IMR-90 (cell line): ENCODE measurements at regions of chr1 and their contacts with region 1.

Region 1: DNA sequence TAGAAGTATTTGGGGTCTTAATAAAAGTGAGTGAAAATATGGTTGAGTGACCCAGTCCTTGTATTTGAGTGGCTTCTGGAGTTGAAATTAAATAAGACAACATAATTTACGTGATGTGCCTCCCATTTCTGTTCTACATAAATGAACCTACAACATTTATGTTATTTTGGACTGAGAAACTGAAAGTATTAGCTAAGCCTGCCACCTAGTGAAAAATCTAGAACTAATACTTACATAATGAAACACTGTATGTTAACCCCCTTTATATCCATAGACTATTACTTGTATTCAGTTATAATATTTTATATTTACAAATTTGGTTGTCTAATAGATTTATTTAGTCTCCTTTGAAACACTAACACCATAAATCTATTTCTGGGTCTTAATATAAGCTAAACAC is 298.9 kb downstream of the KCNT2 start:
- DNase-seq: peak; percentile 68
- ATAC-seq: peak; percentile 82
- H3K4me3 ChIP-seq: no peak overlapping the region
- H3K27ac ChIP-seq: no peak overlapping the region
- H3K4me1 ChIP-seq: peaks cover 2% of the 10 kb centered on the region; the same call in 1 of the 2 replicates
- H3K27me3 ChIP-seq: no peaks in the 10 kb centered on the region
- CTCF ChIP-seq: peak; percentile 58
- POLR2A ChIP-seq: no peak
- RAD21 ChIP-seq: peak; percentile 67

Region 2: DNA sequence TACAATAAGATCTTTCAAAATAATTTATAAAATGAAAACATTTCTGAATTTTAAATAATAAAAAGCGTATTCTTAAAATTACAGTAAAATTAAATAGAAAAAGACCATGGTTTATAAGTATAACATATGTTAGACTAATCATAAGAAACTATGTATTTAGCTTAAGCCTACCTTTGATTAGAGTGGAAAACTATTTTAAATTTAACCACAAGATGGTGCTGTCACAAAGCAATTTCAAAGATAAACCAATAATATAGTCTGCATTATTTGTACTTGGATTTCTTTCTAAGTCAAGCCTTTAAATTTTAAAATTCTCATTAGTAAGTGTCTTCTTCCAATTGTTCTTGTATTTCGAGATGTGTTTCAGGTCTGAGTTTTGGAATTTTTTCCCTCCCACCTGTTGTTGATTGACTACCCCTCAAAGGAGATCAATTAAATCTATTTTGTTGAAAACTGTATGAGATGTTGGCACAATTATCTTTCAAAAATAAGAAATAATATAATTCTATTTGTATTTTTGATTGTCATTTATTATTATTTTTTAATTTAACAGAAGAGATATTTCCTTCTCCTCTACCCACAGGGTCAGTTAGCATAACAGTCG is 160.9 kb before region 1 on chr1:
- CTCF ChIA-PET with region 1: interaction called, 26 read pairs
- POLR2A ChIA-PET with region 1: no interaction called
- dilution Hi-C with region 1: no loop called
- in situ Hi-C with region 1: no loop called
- intact Hi-C with region 1: loop called (anchors 1 kb)
- DNase-seq: peak; percentile 57
- ATAC-seq: peak; percentile 77
- H3K4me3 ChIP-seq: no peak overlapping the region
- H3K27ac ChIP-seq: no peak overlapping the region
- H3K4me1 ChIP-seq: no peaks in the 10 kb centered on the region
- H3K27me3 ChIP-seq: no peaks in the 10 kb centered on the region
- CTCF ChIP-seq: peak; percentile 68
- POLR2A ChIP-seq: no peak
- RAD21 ChIP-seq: peak; percentile 77

Region 3: DNA sequence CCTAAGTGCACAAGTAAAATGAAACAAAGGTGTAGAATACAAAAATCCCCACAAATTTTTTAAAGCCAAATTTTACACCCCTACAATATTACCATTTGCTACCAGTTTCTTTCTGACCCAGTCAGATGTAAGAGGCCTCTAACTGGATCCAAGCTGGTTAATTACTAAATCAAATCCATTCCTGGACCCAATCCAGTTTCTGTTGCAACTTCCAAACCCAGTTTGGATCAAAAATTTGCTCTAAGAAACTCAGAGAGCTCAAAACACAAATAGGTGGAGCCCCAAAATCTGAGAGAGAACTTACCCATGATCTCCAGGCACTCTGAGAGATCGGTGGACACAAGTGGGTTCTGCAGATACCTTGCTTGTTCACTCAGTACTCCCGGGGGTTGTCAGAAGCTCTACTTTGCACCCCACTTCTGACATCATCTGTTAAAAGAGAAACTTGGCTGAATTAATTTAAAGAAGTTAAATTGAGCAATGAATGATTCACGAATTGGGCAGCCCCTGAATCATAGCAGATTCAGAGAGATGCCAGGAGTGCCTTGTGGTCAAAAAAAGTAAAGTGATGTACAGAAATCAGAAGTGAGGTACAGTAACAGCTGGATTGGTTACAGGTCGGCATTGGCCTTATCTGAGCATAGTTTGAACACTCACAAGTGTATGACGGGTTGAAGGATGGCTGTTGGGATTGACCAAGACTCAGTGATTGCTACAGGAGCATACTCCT is 149.2 kb before region 1 on chr1:
- CTCF ChIA-PET with region 1: no interaction called
- POLR2A ChIA-PET with region 1: no interaction called
- dilution Hi-C with region 1: no loop called
- in situ Hi-C with region 1: loop called (anchors 5 kb)
- intact Hi-C with region 1: no loop called
- DNase-seq: peak; percentile 82
- ATAC-seq: peak; percentile 77
- H3K4me3 ChIP-seq: no peak overlapping the region
- H3K27ac ChIP-seq: no peak overlapping the region
- H3K4me1 ChIP-seq: no peaks in the 10 kb centered on the region; the same call in 1 of the 2 replicates
- H3K27me3 ChIP-seq: no peaks in the 10 kb centered on the region
- CTCF ChIP-seq: no peak
- POLR2A ChIP-seq: no peak
- RAD21 ChIP-seq: no peak

Region 4: GRCh38 chr1:196205882-196206281 is 103.5 kb before region 1 on chr1:
- CTCF ChIA-PET with region 1: no interaction called
- POLR2A ChIA-PET with region 1: no interaction called
- dilution Hi-C with region 1: no loop called
- in situ Hi-C with region 1: no loop called
- intact Hi-C with region 1: no loop called
- DNase-seq: no peak
- ATAC-seq: no peak
- H3K4me3 ChIP-seq: no peak overlapping the region
- H3K27ac ChIP-seq: no peak overlapping the region
- H3K4me1 ChIP-seq: peaks cover 6% of the 10 kb centered on the region
- H3K27me3 ChIP-seq: no peaks in the 10 kb centered on the region
- CTCF ChIP-seq: no peak
- POLR2A ChIP-seq: no peak
- RAD21 ChIP-seq: no peak